ENCODE measurements at regions of chr11 and their contacts with region 1.

Region 1: DNA sequence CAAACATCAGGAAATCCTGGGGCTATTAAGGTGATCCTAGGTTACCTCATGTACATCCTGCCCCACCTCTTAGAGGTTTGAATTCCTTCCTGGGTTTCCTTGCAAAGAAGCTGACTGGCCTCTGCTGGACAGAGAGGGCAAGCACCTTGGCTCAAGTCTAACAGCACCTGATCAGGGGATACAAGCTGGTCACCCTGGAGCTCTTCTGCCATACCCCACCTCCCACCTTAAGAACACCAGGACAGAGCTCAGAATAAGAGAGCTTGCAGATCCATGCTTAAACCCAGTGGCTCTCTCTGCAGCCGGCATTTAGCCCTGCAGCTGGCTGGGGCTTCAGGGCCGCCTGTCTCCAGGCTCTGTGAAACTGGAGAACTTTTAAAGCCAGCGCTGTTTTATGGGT is 386.6 kb upstream of the NARS2 start:
- DNase-seq: peak; percentile 56 to 57
- H3K4me3 ChIP-seq: peak overlapping the region; percentile 40 to 74 (median 44); a peak in 7 of 8 replicates
- H3K27ac ChIP-seq: no peak overlapping the region
- H3K4me1 ChIP-seq: peaks cover 2 to 6% (median 4%) of the 10 kb centered on the region in 4 experiments; a peak in 3 of 7 replicates
- H3K27me3 ChIP-seq: peaks cover 0 to 7% (median 0%) of the 10 kb centered on the region in 4 experiments; a peak in 4 of 7 replicates
- CTCF ChIP-seq: peak; percentile 78 to 92 (median 89)
- EP300 ChIP-seq: no peak
- POLR2A ChIP-seq: no peak
- RAD21 ChIP-seq: peak; percentile 97 to 99

Region 2: DNA sequence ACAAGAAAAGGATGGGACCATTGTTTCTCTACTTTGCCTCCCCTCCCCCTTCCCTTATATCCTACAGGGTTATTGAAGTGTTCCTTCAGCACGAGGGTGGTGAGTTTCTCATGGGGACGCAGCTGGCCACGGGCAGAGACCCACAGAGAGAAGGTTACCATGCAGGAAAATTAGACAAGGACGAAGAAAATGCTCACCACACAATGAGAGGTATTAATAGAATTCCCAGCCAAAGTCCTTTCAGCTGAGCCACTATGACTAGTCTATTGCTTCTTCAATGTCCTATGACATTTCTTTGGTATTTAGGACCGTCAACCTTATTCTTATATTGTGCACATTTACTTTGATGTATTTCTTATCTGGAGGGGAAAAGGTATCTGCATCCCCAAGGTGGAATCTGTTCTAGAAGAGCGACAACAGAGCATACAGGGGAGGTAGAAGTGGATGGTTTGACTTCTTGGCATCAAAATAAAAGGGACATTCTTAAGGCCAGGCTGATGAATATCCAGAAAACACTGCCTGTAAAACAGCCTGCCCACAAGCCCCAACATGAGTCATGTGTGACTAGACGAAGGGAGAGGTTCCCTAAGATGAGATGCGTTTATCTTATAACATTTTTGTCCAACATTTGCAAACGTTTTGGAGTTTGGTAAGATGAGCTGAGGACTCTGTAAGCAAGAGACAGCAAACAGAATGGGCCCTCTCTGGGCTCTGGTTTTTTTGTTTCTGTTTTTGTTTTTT is 176.8 kb before region 1 on chr11:
- CTCF ChIA-PET with region 1: interaction called, 11 read pairs
- POLR2A ChIA-PET with region 1: no interaction called
- DNase-seq: no peak
- H3K4me3 ChIP-seq: no peak overlapping the region
- H3K27ac ChIP-seq: no peak overlapping the region
- H3K4me1 ChIP-seq: peaks cover 0 to 2% (median 0%) of the 10 kb centered on the region in 4 experiments; a peak in 1 of 7 replicates
- H3K27me3 ChIP-seq: no peaks in the 10 kb centered on the region
- CTCF ChIP-seq: no peak
- EP300 ChIP-seq: no peak
- POLR2A ChIP-seq: no peak
- RAD21 ChIP-seq: no peak

Region 3: GRCh38 chr11:78833237-78833636 is 128.0 kb before region 1 on chr11:
- CTCF ChIA-PET with region 1: interaction called, 22 read pairs
- POLR2A ChIA-PET with region 1: no interaction called
- DNase-seq: no peak
- H3K4me3 ChIP-seq: no peak overlapping the region
- H3K27ac ChIP-seq: no peak overlapping the region
- H3K4me1 ChIP-seq: peaks cover 0 to 5% (median 2%) of the 10 kb centered on the region in 4 experiments; a peak in 2 of 7 replicates
- H3K27me3 ChIP-seq: no peaks in the 10 kb centered on the region
- CTCF ChIP-seq: no peak
- EP300 ChIP-seq: no peak
- POLR2A ChIP-seq: no peak
- RAD21 ChIP-seq: no peak

Region 4: DNA sequence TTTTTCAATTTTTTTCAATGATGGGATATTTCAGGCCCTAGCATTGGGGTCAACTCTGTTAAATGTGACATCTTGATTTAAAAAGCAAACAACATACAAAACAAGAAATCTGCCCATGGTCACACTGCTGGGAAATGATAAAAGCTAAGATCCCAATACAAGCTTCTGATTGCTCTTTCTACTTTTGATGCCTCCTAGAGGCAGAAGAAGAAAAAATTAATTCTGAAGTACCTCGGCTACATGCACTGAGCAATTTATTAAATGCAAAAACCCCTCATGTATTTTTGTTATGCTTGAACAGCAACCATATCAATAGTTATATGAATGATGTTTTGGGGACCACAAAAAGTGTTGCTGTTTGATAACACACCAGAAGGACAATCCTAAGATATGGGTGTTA is 44.5 kb before region 1 on chr11:
- CTCF ChIA-PET with region 1: interaction called, 26 read pairs
- POLR2A ChIA-PET with region 1: no interaction called
- DNase-seq: no peak
- H3K4me3 ChIP-seq: no peak overlapping the region
- H3K27ac ChIP-seq: no peak overlapping the region
- H3K4me1 ChIP-seq: no peaks in the 10 kb centered on the region
- H3K27me3 ChIP-seq: peaks cover 0 to 1% (median 0%) of the 10 kb centered on the region in 4 experiments; a peak in 2 of 7 replicates
- CTCF ChIP-seq: no peak
- EP300 ChIP-seq: no peak
- POLR2A ChIP-seq: no peak
- RAD21 ChIP-seq: peak in 1 of 2 experiments; percentile 2; a peak in 1 of 4 replicates

Region 5: DNA sequence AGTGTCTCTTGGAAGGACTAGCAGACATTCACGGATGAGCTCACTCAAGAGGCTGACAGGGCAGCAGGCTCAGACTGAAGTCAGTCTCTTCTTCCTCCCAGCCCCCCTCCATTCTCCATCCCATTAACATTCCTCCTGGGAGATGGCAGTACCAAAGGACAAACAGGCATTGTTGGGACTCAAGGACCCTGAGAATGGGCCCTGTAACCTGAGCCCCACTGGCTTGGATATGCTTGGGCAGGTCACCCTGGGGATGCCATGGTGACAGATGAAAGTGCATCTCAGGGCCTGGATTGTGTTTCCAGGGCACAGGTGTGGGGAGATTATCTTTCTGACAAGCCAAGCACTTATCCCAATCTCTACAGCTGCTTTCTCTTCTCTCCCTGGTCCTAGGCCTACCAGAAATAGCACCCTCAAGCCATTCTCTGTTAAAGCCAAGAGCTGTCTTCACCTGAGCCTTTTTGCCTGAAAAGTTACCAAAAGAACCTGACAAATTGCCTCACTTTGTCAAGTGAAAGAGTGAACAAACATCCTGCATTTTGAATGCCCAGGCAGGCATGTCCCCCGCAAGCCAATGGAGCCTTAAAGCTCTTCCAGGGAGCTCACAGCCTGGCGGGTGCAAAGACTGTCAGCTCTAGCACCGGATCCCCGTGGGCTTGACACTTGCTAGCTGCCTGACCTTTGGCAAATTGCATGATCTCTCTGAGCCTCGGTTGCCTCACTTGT is 20.6 kb before region 1 on chr11:
- CTCF ChIA-PET with region 1: interaction called, 15 read pairs
- POLR2A ChIA-PET with region 1: interaction called, 3 read pairs
- DNase-seq: peak; percentile 61 to 63
- H3K4me3 ChIP-seq: no peak overlapping the region
- H3K27ac ChIP-seq: no peak overlapping the region
- H3K4me1 ChIP-seq: peaks cover 7 to 20% (median 15%) of the 10 kb centered on the region in 4 experiments
- H3K27me3 ChIP-seq: peaks cover 0 to 2% (median 0%) of the 10 kb centered on the region in 4 experiments; a peak in 3 of 7 replicates
- CTCF ChIP-seq: no peak
- EP300 ChIP-seq: no peak
- POLR2A ChIP-seq: no peak
- RAD21 ChIP-seq: peak in 1 of 2 experiments; percentile 19; a peak in 1 of 4 replicates

Region 6: GRCh38 chr11:79018371-79018849 is 57.2 kb after region 1 on chr11:
- CTCF ChIA-PET with region 1: no interaction called
- POLR2A ChIA-PET with region 1: no interaction called
- DNase-seq: no peak
- H3K4me3 ChIP-seq: no peak overlapping the region
- H3K27ac ChIP-seq: no peak overlapping the region
- H3K4me1 ChIP-seq: no peaks in the 10 kb centered on the region
- H3K27me3 ChIP-seq: no peaks in the 10 kb centered on the region
- CTCF ChIP-seq: no peak
- EP300 ChIP-seq: no peak
- POLR2A ChIP-seq: no peak
- RAD21 ChIP-seq: no peak

Region 7: GRCh38 chr11:79069504-79069903 is 108.3 kb after region 1 on chr11:
- CTCF ChIA-PET with region 1: no interaction called
- POLR2A ChIA-PET with region 1: no interaction called
- DNase-seq: no peak
- H3K4me3 ChIP-seq: no peak overlapping the region
- H3K27ac ChIP-seq: no peak overlapping the region
- H3K4me1 ChIP-seq: peaks cover 0 to 19% (median 8%) of the 10 kb centered on the region in 4 experiments
- H3K27me3 ChIP-seq: no peaks in the 10 kb centered on the region
- CTCF ChIP-seq: no peak
- EP300 ChIP-seq: no peak
- POLR2A ChIP-seq: no peak
- RAD21 ChIP-seq: no peak